ENCODE measurements at regions of chr1 and their contacts with region 1.

Region 1: GRCh38 chr1:93749894-93750301 is 68.3 kb upstream of the BCAR3 start:
- DNase-seq: peak; percentile 66
- ATAC-seq: peak; percentile 69
- H3K4me3 ChIP-seq: no peak overlapping the region
- H3K27ac ChIP-seq: peak overlapping the region; percentile 63
- H3K4me1 ChIP-seq: peaks cover 37% of the 10 kb centered on the region
- H3K27me3 ChIP-seq: no peaks in the 10 kb centered on the region
- CTCF ChIP-seq: peak; percentile 59

Region 2: DNA sequence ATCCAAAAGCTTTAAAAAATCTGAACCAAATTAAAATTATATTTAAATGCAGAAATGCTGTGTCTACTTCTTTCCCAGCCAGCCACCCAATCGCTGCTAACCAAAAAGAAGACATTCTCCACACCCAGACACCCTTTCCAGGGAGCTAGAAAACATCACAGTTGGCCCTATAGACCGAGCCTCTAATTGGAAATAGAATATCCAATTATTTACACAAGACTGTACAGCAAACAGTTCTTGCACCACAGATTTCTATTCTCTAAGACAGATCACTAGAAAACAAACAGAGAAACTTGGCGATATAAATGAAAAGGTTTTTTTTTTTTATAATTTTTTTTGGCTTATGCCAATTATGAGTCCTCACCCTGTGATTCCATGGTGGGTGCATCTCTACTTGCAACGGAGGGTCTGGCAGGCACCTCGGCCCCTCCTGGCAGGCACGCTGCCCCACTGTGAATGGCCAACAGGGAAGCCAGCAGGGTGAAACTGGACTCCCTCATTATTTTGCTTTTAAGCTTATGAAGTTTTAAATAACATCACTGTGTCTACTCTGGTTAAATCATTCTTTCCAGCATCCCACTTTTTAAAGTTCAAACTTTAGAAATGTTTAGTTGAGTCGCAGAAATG is 97.5 kb before region 1 on chr1:
- CTCF ChIA-PET with region 1: no interaction called
- POLR2A ChIA-PET with region 1: interaction called, 16 read pairs
- intact Hi-C with region 1: no loop called
- DNase-seq: no peak
- ATAC-seq: peak; percentile 29
- H3K4me3 ChIP-seq: no peak overlapping the region
- H3K27ac ChIP-seq: no peak overlapping the region
- H3K4me1 ChIP-seq: no peaks in the 10 kb centered on the region
- H3K27me3 ChIP-seq: no peaks in the 10 kb centered on the region
- CTCF ChIP-seq: no peak

Region 3: GRCh38 chr1:93692983-93693591 is 56.8 kb before region 1 on chr1:
- CTCF ChIA-PET with region 1: no interaction called
- POLR2A ChIA-PET with region 1: no interaction called
- intact Hi-C with region 1: loop called (anchors 2 kb)
- DNase-seq: peak; percentile 97
- ATAC-seq: peak; percentile 70
- H3K4me3 ChIP-seq: peak overlapping the region; percentile 43; the same call in 1 of the 2 replicates
- H3K27ac ChIP-seq: peak overlapping the region; percentile 99
- H3K4me1 ChIP-seq: peaks cover 58% of the 10 kb centered on the region
- H3K27me3 ChIP-seq: no peaks in the 10 kb centered on the region
- CTCF ChIP-seq: no peak

Region 4: DNA sequence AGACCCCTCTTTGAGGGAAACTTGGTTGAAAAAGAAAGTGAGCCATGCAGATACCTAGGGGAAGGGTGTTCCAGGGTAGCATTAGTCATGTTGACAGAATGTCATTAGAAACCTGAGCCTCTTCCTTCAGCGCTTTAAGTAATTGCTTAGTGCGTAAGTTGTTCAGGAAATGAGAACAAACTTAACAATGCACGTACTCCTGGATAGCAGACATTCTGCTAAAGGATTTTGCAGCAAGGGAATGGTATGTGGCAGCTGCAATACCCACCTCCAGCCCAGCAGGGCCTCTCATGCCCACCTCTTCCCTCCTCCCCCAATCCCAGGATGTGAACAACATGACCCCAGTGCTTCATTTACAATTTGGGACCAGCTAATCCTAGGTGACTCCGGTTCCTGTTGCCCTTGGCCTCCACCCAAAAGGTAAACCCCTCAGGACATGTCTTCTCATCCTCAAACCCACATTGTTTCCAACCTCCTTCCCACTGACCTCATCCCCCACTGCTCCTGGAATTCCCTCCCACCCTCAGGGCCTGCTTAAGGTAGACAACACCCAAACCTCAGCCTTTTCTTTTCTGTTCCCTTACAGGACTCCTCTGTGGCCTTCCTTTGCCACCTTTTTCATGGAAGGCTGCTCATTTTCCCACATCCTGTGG is 29.8 kb after region 1 on chr1:
- CTCF ChIA-PET with region 1: no interaction called
- POLR2A ChIA-PET with region 1: interaction called, 12 read pairs
- intact Hi-C with region 1: no loop called
- DNase-seq: peak; percentile 99
- ATAC-seq: peak; percentile 85
- H3K4me3 ChIP-seq: no peak overlapping the region; the same call in 1 of the 2 replicates
- H3K27ac ChIP-seq: peak overlapping the region; percentile 98
- H3K4me1 ChIP-seq: peaks cover 48% of the 10 kb centered on the region
- H3K27me3 ChIP-seq: no peaks in the 10 kb centered on the region
- CTCF ChIP-seq: no peak